CD8-positive, alpha-beta memory T cell (primary cell): ENCODE measurements at regions of chr19 and their contacts with region 1.

Region 1: GRCh38 chr19:49640113-49640898 is at the start of gene RRAS:
- DNase-seq: peak; percentile 99 to 100 (median 99)
- H3K4me3 ChIP-seq: peak within 1 kb of the TSS; percentile 87
- H3K4me3 Mint-ChIP-seq: peak within 1 kb of the TSS; percentile 85 to 97 (median 95)
- H3K27ac ChIP-seq: peak within 1 kb of the TSS; percentile 94
- H3K27ac Mint-ChIP-seq: peak within 1 kb of the TSS; percentile 94 to 99 (median 98)
- H3K4me1 ChIP-seq: peaks cover 37% of the 10 kb centered on the region
- H3K4me1 Mint-ChIP-seq: peaks cover 52 to 67% (median 61%) of the 10 kb centered on the region in 3 donors
- H3K27me3 ChIP-seq: no peaks in the 10 kb centered on the region
- H3K27me3 Mint-ChIP-seq: peaks cover 0 to 3% of the 10 kb centered on the region in 2 donors
- total RNA-seq, gene RRAS: 5.3 to 5.8 TPM

Region 2: DNA sequence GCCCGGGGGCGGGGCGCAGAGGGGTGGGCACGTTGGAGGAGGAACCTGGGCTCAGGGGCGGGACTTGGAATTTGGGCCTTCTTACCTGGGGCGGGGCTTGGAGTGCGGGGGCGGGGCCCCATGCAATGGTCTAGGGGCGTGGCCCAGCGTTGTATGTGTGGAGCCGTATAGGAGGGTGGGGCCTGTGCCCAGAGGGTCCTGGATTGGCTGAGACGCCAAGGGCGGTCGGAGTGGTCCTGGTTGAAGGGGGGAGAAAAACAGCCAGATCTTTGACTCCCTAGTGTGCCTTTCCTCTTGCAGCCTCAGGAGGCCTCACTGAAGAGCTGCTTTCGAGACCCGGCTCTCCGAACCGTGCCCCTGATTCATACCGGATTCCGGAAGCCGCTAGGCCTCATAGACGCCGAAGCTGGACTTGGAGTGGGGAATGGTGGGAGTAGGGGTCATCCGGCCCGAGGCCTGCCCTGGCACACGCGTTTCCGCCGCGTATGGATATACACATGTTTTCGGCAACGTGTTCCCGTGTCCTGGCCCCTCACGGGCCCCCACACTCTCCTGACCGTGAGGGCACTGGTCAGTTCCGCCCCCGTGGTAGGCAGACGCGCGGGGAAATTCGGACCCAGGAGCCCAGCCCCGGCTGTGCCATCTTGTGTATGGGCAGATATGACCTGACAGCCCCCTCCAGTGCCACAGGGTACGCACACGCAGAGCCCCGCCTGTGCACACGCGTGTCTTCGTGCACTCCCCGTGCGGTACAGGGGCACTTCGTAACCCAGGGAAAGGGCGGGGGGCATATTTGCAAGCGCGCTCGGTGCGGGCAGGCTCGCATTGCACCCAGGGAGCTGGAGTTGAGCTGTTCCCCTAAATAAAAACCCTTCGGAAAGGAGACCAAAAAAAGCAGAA is 50.0 kb before region 1 on chr19:
- CTCF ChIA-PET with region 1: interaction called, 3 read pairs
- POLR2A ChIA-PET with region 1: interaction called, 23 read pairs
- DNase-seq: peak; percentile 91 to 98 (median 97)
- H3K4me3 ChIP-seq: peak overlapping the region; percentile 95
- H3K4me3 Mint-ChIP-seq: peak overlapping the region; percentile 85 to 96 (median 90)
- H3K27ac ChIP-seq: peak overlapping the region; percentile 88
- H3K27ac Mint-ChIP-seq: peak overlapping the region; percentile 77 to 95 (median 90)
- H3K4me1 ChIP-seq: peaks cover 26% of the 10 kb centered on the region
- H3K4me1 Mint-ChIP-seq: peaks cover 33 to 45% (median 34%) of the 10 kb centered on the region in 3 donors
- H3K27me3 ChIP-seq: no peaks in the 10 kb centered on the region
- H3K27me3 Mint-ChIP-seq: peaks cover 0 to 5% of the 10 kb centered on the region in 2 donors

Region 3: DNA sequence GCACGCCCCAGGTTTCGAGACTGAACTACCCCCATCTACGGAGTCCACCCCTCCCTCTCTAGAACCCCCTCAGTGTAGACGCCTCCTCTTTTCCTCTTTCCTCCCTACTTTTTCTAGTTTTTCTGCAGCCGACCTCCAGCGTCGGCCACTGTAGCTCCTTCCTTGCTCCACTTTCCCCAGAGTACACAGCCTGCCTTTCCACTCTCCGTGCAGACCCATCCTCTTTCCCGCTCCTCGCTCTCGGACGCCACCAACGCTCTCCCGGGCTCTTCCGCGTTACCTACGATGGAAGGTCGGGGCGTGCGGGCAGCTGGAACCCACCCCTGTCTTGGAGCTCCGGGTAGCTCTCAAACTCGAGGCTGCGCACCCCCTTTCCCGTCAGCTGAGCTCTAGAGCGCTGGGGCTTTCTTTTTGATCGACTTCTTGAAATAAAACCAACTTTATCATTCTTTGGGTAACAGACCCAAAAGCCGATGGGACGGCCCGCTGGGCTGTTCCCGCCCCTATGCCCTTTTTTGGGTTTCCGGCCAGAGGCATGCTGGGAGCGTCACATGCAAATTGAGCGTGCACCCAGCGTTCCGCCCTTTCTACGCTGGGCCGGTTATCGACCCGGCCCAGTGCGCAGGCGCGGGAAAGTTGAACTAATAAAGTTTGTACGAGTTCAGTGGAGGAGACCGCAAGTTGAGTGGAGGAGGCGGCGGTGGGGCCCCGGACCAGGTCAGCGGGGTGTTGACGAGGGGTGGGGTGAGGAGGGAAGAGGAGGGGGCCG is 25.2 kb after region 1 on chr19 and contains the starts of genes BCL2L12 and IRF3:
- CTCF ChIA-PET with region 1: interaction called, 18 read pairs
- POLR2A ChIA-PET with region 1: interaction called, 61 read pairs
- DNase-seq: peak; percentile 98 to 100 (median 100)
- H3K4me3 ChIP-seq: peak within 1 kb of the TSS; percentile 99
- H3K4me3 Mint-ChIP-seq: peak within 1 kb of the TSS; percentile 95 to 99 (median 97)
- H3K27ac ChIP-seq: peak within 1 kb of the TSS; percentile 77
- H3K27ac Mint-ChIP-seq: peak within 1 kb of the TSS; percentile 74 to 100 (median 98)
- H3K4me1 ChIP-seq: peaks cover 29% of the 10 kb centered on the region
- H3K4me1 Mint-ChIP-seq: peaks cover 28 to 44% (median 40%) of the 10 kb centered on the region in 3 donors
- H3K27me3 ChIP-seq: no peaks in the 10 kb centered on the region
- H3K27me3 Mint-ChIP-seq: no peaks in the 10 kb centered on the region
- total RNA-seq, gene BCL2L12: 68.2 to 70.9 TPM
- total RNA-seq, gene IRF3: 118 to 127 TPM